ENCODE measurements at regions of chrX and their contacts with region 1.

Region 1: DNA sequence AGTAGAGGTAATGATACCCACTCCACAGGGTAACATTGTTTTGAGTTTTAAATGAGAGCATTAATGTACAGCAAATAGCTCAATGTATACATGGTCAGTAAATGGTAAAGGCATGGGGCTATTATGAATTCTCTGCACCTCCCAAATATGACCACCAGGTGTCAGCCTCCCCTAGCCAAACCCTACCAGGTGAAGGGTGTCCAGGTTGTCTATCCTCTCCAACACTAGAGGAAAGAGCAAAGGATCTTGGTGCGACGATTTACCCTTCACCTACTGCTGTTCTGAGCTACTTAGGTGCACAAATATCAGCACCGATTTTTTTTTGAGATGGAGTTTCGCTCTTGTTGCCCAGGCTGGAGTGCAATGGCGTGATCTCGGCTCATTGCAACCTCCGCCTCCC is 26.5 kb upstream of the XIAP start:
- DNase-seq: no peak
- H3K4me3 ChIP-seq: no peak overlapping the region
- CTCF ChIP-seq: peak; percentile 56

Region 2: DNA sequence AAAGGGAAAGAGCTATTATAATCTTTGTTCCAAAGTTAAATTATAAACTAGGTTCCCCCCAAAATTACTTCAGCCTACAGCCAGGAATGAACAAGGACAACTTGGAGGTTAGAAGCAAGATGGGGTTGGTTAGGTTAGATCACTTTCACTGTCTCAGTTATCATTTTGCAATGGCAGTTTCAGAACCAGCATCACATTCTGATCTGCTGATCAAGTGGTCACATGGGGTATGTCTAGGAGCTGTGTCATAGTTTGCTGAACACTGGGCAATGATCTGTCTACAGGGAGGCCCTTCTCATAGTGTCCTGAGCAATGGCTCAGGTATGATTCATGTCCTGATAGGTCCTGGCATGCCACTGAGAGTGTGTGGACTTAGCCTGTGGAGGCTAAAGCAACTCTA is 15.1 kb before region 1 on chrX:
- CTCF ChIA-PET with region 1: interaction called, 29 read pairs
- POLR2A ChIA-PET with region 1: no interaction called
- DNase-seq: peak; percentile 21
- H3K4me3 ChIP-seq: no peak overlapping the region
- CTCF ChIP-seq: no peak

Region 3: DNA sequence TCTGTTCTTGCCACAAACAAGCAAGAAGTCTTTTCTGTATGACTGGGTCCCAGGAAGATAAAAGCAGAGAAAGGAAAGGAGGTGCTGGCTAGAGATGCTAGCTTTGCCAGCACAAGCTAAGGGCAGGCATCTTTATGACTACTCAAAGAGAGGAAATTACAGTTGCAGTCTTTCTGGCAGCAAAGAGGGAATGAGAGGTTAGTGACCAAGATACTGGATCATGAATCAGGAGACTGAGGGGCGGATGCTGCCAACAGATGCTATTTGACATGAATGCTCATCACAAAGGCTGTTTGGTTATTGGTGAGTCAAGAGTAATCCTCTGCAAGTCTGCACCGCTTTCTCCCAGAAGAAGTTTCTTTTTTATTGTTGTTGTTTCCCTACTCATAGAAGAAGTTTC is 20.9 kb after region 1 on chrX:
- CTCF ChIA-PET with region 1: interaction called, 10 read pairs
- POLR2A ChIA-PET with region 1: no interaction called
- DNase-seq: no peak
- H3K4me3 ChIP-seq: no peak overlapping the region
- CTCF ChIP-seq: no peak

Region 4: DNA sequence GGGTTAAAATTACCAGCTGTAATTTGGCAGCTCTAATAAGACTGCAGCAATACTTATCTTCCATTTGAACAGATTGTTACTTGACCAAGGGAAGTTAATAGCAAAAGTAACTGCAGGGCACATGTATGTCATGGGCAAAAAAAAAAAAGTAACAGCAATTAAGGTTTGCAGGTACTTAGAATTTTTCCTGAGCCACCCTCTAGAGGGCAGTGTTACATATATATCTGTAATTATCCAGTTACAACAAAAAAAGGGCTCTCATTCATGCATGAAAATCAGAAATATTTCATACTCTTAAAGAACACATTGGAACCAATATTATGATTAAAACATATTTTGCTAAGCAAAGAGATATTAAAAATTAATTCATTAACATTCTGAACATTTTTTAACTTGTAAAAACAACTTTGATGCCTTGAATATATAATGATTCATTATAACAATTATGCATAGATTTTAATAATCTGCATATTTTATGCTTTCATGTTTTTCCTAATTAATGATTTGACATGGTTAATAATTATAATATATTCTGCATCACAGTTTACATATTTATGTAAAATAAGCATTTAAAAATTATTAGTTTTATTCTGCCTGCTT is 51.5 kb after region 1 on chrX:
- CTCF ChIA-PET with region 1: interaction called, 15 read pairs
- POLR2A ChIA-PET with region 1: no interaction called
- DNase-seq: no peak
- H3K4me3 ChIP-seq: no peak overlapping the region
- CTCF ChIP-seq: no peak

Region 5: GRCh38 chrX:123976706-123977316 is 143.4 kb after region 1 on chrX:
- CTCF ChIA-PET with region 1: interaction called, 18 read pairs
- POLR2A ChIA-PET with region 1: interaction called, 3 read pairs
- DNase-seq: no peak
- H3K4me3 ChIP-seq: no peak overlapping the region
- CTCF ChIP-seq: no peak

Region 6: DNA sequence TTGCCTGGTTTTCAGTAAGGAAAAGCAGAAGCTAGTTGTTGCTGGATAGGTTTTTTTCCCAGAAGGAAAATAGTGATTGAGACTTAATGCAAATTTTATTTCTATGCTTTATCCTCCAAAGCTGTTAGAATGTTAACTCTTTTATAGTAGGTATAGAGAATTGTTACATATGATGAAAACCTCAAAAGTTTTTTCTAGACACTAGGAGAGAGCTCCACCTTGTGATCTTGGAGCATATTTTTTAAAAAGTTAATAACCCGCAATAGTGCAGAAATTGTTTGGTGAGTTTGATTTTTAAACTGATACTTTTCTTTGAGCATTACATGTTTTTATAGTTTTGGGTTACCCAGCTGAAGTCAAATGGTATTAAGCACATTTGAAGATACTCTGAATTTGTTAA is 184.6 kb after region 1 on chrX:
- CTCF ChIA-PET with region 1: interaction called, 11 read pairs
- POLR2A ChIA-PET with region 1: no interaction called
- DNase-seq: no peak
- H3K4me3 ChIP-seq: no peak overlapping the region
- CTCF ChIP-seq: no peak

Measured in AG04449 (cell line).